ENCODE measurements at regions of chr14 and their contacts with region 1.

Region 1: DNA sequence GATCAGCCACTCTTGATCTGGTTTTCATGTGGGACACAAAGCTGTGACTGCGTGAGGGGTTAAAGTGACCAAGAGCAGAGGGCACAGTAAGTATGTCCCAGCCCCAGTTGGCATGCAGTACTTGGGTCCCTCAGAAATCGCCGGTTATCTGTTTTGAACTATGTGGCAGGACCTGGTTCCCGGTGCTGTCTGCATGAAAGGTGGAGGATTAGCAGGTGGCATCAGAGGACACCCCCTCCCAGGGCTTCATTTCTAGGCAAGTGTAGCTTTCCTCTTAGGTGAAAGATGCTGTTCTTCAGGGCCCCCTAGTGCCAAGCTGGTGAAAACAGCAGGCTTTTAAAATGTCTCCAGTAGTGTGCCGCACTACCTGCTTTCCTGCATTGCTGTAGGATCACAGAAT is 57.1 kb downstream of the ATG14 start:
- DNase-seq: peak; percentile 73
- H3K4me3 Mint-ChIP-seq: peak overlapping the region; percentile 57
- H3K27ac Mint-ChIP-seq: peak overlapping the region; percentile 86
- H3K4me1 Mint-ChIP-seq: peaks cover 25% of the 10 kb centered on the region
- H3K27me3 Mint-ChIP-seq: no peaks in the 10 kb centered on the region

Region 2: DNA sequence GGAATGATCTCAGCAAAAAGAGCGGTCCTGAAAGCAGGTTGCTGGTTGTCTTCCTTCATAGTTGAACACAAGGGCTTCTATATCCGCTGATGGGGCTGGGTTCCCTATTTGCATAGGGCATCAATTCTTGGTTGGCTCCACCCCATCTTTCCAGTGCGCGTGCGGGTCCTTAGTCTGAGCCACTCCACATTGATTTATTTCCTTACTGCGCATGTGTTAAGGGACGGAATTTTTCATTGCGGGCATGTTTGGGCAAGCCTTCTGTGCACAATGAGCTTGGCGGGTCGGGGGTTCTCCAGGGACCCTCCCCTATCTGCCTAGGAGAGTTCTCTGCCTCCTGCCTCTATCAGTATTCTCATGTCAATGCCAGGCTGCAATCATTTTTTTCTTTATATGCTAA is 141.9 kb before region 1 on chr14:
- CTCF ChIA-PET with region 1: interaction called, 29 read pairs
- POLR2A ChIA-PET with region 1: no interaction called
- intact Hi-C with region 1: loop called (anchors 1 kb)
- DNase-seq: no peak
- H3K4me3 Mint-ChIP-seq: no peak overlapping the region
- H3K27ac Mint-ChIP-seq: no peak overlapping the region
- H3K4me1 Mint-ChIP-seq: peaks cover 2% of the 10 kb centered on the region
- H3K27me3 Mint-ChIP-seq: no peaks in the 10 kb centered on the region

Region 3: GRCh38 chr14:55265197-55265596 is 89.3 kb before region 1 on chr14:
- CTCF ChIA-PET with region 1: interaction called, 180 read pairs
- POLR2A ChIA-PET with region 1: no interaction called
- intact Hi-C with region 1: no loop called
- DNase-seq: peak; percentile 19
- H3K4me3 Mint-ChIP-seq: no peak overlapping the region
- H3K27ac Mint-ChIP-seq: no peak overlapping the region
- H3K4me1 Mint-ChIP-seq: peaks cover 2% of the 10 kb centered on the region
- H3K27me3 Mint-ChIP-seq: peaks cover 6% of the 10 kb centered on the region

Region 4: GRCh38 chr14:55277972-55278740 is 76.3 kb before region 1 on chr14:
- CTCF ChIA-PET with region 1: interaction called, 180 read pairs
- POLR2A ChIA-PET with region 1: no interaction called
- intact Hi-C with region 1: no loop called
- DNase-seq: peak; percentile 56
- H3K4me3 Mint-ChIP-seq: peak overlapping the region; percentile 10
- H3K27ac Mint-ChIP-seq: peak overlapping the region; percentile 72
- H3K4me1 Mint-ChIP-seq: peaks cover 68% of the 10 kb centered on the region
- H3K27me3 Mint-ChIP-seq: no peaks in the 10 kb centered on the region

Region 5: DNA sequence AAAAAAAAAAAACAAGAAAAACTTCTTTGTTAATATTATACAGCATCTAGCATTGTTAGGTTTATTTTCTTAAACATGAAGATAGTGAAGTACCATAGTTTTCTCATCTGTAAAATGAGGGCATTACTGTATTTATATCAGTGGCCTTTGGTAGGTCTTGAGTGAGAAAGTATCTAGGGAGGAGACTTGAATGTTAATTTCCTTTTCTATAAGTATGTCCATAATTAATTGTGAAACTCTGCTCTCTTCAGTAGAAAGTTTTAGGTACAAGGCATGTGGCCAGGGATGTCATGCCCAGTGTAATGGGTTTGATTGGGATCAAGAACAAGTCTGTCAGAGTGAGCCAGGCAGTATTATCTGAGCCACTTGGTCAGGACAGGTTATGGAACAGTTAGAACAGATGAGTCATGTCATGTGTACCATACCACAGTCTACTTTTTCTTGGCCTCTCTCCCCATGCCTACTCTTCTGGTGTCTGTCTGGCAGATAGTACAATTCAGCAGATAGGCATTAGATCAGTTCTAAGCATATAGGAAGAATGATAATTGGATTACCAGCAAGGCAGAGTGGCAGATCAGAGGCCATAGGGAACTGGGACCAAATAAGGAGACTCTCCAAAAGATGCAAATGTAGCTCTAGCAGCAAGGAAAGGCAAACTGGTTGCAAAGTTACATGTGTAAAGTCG is 52.9 kb before region 1 on chr14:
- CTCF ChIA-PET with region 1: interaction called, 13 read pairs
- POLR2A ChIA-PET with region 1: no interaction called
- intact Hi-C with region 1: loop called (anchors 2 kb)
- DNase-seq: peak; percentile 21
- H3K4me3 Mint-ChIP-seq: no peak overlapping the region
- H3K27ac Mint-ChIP-seq: peak overlapping the region; percentile 1
- H3K4me1 Mint-ChIP-seq: peaks cover 69% of the 10 kb centered on the region
- H3K27me3 Mint-ChIP-seq: no peaks in the 10 kb centered on the region

Region 6: GRCh38 chr14:55333711-55334485 is 20.6 kb before region 1 on chr14:
- CTCF ChIA-PET with region 1: interaction called, 49 read pairs
- POLR2A ChIA-PET with region 1: interaction called, 6 read pairs
- intact Hi-C with region 1: loop called (anchors 1 kb)
- DNase-seq: peak; percentile 20
- H3K4me3 Mint-ChIP-seq: peak overlapping the region; percentile 9
- H3K27ac Mint-ChIP-seq: peak overlapping the region; percentile 57
- H3K4me1 Mint-ChIP-seq: peaks cover 85% of the 10 kb centered on the region
- H3K27me3 Mint-ChIP-seq: no peaks in the 10 kb centered on the region

Region 7: GRCh38 chr14:55373784-55374705 is 19.5 kb after region 1 on chr14:
- CTCF ChIA-PET with region 1: interaction called, 21 read pairs
- POLR2A ChIA-PET with region 1: no interaction called
- intact Hi-C with region 1: loop called (anchors 2 kb)
- DNase-seq: peak; percentile 45
- H3K4me3 Mint-ChIP-seq: peak overlapping the region; percentile 49
- H3K27ac Mint-ChIP-seq: peak overlapping the region; percentile 91
- H3K4me1 Mint-ChIP-seq: peaks cover 45% of the 10 kb centered on the region
- H3K27me3 Mint-ChIP-seq: no peaks in the 10 kb centered on the region

Measured in activated CD4-positive, alpha-beta memory T cell treated with anti-CD3 and anti-CD28 coated beads for 36 hours (primary cell).